ENCODE measurements at regions of chr19 and their contacts with region 1.

Region 1: DNA sequence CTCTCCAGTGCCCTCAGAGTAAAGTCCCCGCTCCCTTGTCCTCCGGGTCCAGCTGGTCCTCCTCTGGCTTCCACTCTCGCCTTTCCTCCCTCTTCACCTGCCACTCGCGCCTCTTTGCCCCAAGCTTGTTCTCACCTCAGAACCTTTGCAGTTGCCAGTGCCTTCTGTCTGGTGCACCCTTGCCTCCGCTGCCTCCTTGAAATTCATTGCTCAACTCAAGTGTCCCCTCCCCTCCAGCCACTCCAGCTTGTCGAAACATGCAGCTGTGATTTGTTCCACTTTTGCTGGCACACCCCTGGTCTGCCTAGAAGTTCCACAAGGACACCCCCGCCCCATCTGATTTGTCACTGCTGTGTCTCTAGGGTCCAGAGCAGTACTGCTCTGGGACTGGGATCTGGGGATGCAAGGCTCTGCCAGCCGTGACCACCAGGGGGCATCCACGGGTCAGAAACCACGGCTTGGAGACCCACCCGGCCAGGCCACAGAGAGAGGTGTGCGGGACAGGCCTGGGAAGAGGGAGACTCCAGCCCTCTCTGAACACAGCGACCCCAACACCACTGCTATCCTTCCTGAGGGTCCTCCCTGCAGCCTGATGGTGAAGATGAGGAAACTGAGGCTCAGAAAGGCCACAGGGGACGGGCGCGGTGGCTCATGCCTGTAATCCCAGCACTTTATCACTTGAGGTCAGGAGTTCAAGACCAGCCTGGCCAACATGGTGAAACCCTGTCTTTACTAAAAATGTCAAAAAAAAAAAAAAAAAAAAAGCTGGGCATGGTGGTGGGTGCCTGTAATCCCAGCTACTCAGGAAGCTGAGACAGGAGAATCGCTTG is 49.9 kb downstream of the AP1M1 start:
- DNase-seq: peak; percentile 75 to 84 (median 77)
- H3K4me3 ChIP-seq: no peak overlapping the region
- H3K27ac ChIP-seq: no peak overlapping the region
- H3K4me1 ChIP-seq: peaks cover 0 to 2% (median 0%) of the 10 kb centered on the region in 4 experiments
- H3K27me3 ChIP-seq: no peaks in the 10 kb centered on the region

Region 2: GRCh38 chr19:16095071-16095571 is 152.4 kb before region 1 on chr19:
- CTCF ChIA-PET with region 1: no interaction called
- POLR2A ChIA-PET with region 1: no interaction called
- DNase-seq: peak in 2 of 3 donors; percentile 53 to 58
- H3K4me3 ChIP-seq: no peak overlapping the region
- H3K27ac ChIP-seq: no peak overlapping the region
- H3K4me1 ChIP-seq: peaks cover 0 to 3% (median 1%) of the 10 kb centered on the region in 4 experiments
- H3K27me3 ChIP-seq: no peaks in the 10 kb centered on the region

Region 3: GRCh38 chr19:16315825-16316505 is 68.4 kb after region 1 on chr19:
- CTCF ChIA-PET with region 1: interaction called, 13 read pairs
- POLR2A ChIA-PET with region 1: no interaction called
- DNase-seq: peak; percentile 70 to 86 (median 75)
- H3K4me3 ChIP-seq: peak overlapping the region in 1 of 7 experiments; percentile 13
- H3K27ac ChIP-seq: no peak overlapping the region
- H3K4me1 ChIP-seq: peaks cover 3 to 11% (median 10%) of the 10 kb centered on the region in 4 experiments
- H3K27me3 ChIP-seq: peaks cover 0 to 5% (median 1%) of the 10 kb centered on the region in 5 experiments

Region 4: GRCh38 chr19:16336571-16336970 is 89.0 kb after region 1 on chr19:
- CTCF ChIA-PET with region 1: interaction called, 41 read pairs
- POLR2A ChIA-PET with region 1: no interaction called
- DNase-seq: no peak
- H3K4me3 ChIP-seq: no peak overlapping the region
- H3K27ac ChIP-seq: no peak overlapping the region
- H3K4me1 ChIP-seq: peaks cover 3 to 21% (median 17%) of the 10 kb centered on the region in 4 experiments
- H3K27me3 ChIP-seq: peaks cover 0 to 4% (median 0%) of the 10 kb centered on the region in 5 experiments

Region 5: DNA sequence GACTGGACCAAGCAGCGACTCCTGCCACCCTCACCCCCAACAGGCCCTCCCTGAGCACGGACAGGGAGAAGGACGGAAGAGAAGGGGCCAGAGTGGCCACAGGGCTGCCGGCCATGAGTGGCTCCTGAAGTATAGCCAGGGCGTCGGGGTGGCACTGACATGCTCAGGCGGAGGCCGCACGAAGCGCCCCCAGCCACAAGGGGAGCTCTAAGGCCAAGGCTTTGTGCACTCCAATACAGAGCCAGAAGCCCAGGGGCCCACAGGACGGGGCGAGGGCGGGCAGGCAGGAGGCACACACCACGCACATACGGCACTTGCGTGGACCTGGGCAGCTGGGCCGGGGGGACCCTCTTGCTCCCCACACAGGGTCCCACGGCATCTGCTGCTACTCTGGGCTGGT is 129.1 kb after region 1 on chr19:
- CTCF ChIA-PET with region 1: interaction called, 52 read pairs
- POLR2A ChIA-PET with region 1: no interaction called
- DNase-seq: peak in 2 of 3 donors; percentile 32 to 42
- H3K4me3 ChIP-seq: no peak overlapping the region
- H3K27ac ChIP-seq: no peak overlapping the region
- H3K4me1 ChIP-seq: peaks cover 10 to 14% (median 10%) of the 10 kb centered on the region in 4 experiments
- H3K27me3 ChIP-seq: no peaks in the 10 kb centered on the region

Region 6: DNA sequence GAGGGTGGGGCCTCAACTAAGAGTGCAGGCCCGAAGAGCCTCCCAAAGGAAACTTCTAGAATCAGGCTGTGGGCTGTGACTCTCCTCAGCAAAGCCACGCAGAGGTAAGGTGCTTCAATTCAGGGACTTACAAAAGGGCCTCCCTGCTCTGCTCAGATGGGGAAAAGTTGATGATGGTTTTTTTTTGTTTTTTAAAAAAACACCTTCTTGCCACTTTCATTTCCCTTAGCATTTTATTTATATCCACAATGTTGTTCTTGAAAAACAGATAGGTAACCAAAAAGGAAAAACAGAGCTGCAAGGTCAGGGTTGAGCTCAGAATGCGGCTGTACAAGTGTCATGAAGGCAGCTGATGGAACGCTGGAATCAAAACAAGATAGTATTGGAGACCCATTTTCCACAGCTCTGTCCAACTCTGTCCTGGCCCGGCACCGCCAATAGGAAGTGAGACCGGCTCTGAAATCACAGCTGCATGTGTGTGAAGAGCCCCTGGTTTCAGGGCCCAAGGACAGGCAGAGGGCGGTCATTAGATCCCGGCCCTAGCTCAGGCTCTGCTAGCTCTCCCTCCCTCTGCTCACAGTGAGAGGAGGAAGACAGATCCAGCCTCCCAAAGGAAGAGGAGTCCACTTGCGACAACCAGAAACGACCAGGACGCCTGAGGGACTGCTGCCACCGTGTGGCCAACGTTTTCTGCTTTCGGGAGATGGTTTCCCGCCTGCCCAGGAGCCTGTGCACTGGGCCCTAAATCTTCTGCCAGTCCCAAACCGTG is 135.4 kb after region 1 on chr19:
- CTCF ChIA-PET with region 1: interaction called, 52 read pairs
- POLR2A ChIA-PET with region 1: interaction called, 3 read pairs
- DNase-seq: peak; percentile 67 to 80 (median 68)
- H3K4me3 ChIP-seq: no peak overlapping the region
- H3K27ac ChIP-seq: no peak overlapping the region
- H3K4me1 ChIP-seq: no peaks in the 10 kb centered on the region
- H3K27me3 ChIP-seq: no peaks in the 10 kb centered on the region

Measured in common myeloid progenitor, CD34-positive (primary cell).